T-cell (primary cell): ENCODE measurements at regions of chr19 and their contacts with region 1.

Region 1: GRCh38 chr19:46256855-46257254 is 27.3 kb downstream of the IGFL1 start:
- DNase-seq: no peak
- ATAC-seq: no peak
- H3K4me3 ChIP-seq: no peak overlapping the region
- H3K4me3 Mint-ChIP-seq: no peak overlapping the region
- H3K27ac ChIP-seq: no peak overlapping the region
- H3K27ac Mint-ChIP-seq: no peak overlapping the region
- H3K4me1 ChIP-seq: no peaks in the 10 kb centered on the region
- H3K4me1 Mint-ChIP-seq: no peaks in the 10 kb centered on the region
- H3K27me3 ChIP-seq: peaks cover 0 to 30% of the 10 kb centered on the region in 2 experiments
- H3K27me3 Mint-ChIP-seq: peaks cover 22 to 27% of the 10 kb centered on the region in 2 donors

Region 2: GRCh38 chr19:46181388-46181779 is 75.5 kb before region 1 on chr19:
- CTCF ChIA-PET with region 1: no interaction called
- POLR2A ChIA-PET with region 1: no interaction called
- DNase-seq: no peak
- ATAC-seq: no peak
- H3K4me3 ChIP-seq: no peak overlapping the region
- H3K4me3 Mint-ChIP-seq: no peak overlapping the region
- H3K27ac ChIP-seq: no peak overlapping the region
- H3K27ac Mint-ChIP-seq: no peak overlapping the region
- H3K4me1 ChIP-seq: no peaks in the 10 kb centered on the region
- H3K4me1 Mint-ChIP-seq: peaks cover 4 to 11% (median 5%) of the 10 kb centered on the region in 3 donors
- H3K27me3 ChIP-seq: peaks cover 0 to 35% of the 10 kb centered on the region in 2 experiments
- H3K27me3 Mint-ChIP-seq: peaks cover 29 to 30% of the 10 kb centered on the region in 2 donors

Region 3: GRCh38 chr19:46925548-46925950 is 668.7 kb after region 1 on chr19:
- CTCF ChIA-PET with region 1: no interaction called
- POLR2A ChIA-PET with region 1: interaction called in 1 of 2 experiments, 10 read pairs
- DNase-seq: no peak
- ATAC-seq: no peak
- H3K4me3 ChIP-seq: no peak overlapping the region
- H3K4me3 Mint-ChIP-seq: no peak overlapping the region
- H3K27ac ChIP-seq: no peak overlapping the region
- H3K27ac Mint-ChIP-seq: no peak overlapping the region
- H3K4me1 ChIP-seq: peaks cover 3 to 34% of the 10 kb centered on the region in 2 experiments
- H3K4me1 Mint-ChIP-seq: peaks cover 41 to 61% (median 54%) of the 10 kb centered on the region in 3 donors
- H3K27me3 ChIP-seq: no peaks in the 10 kb centered on the region
- H3K27me3 Mint-ChIP-seq: no peaks in the 10 kb centered on the region